Mammary epithelial cell (primary cell): ENCODE measurements at regions of chr6 and their contacts with region 1.

Region 1: GRCh38 chr6:42230345-42231321 is 13.0 kb upstream of the MRPS10 start:
- DNase-seq: no peak
- H3K4me3 ChIP-seq: no peak overlapping the region
- H3K27ac ChIP-seq: peak overlapping the region; percentile 45
- H3K4me1 ChIP-seq: peaks cover 38% of the 10 kb centered on the region
- H3K27me3 ChIP-seq: no peaks in the 10 kb centered on the region
- CTCF ChIP-seq: peak; percentile 68 to 69

Region 2: GRCh38 chr6:42075159-42075838 is 155.3 kb before region 1 on chr6:
- CTCF ChIA-PET with region 1: no interaction called
- dilution Hi-C with region 1: no loop called
- in situ Hi-C with region 1: no loop called
- intact Hi-C with region 1: loop called (anchors 1 kb)
- DNase-seq: peak; percentile 67
- H3K4me3 ChIP-seq: no peak overlapping the region
- H3K27ac ChIP-seq: no peak overlapping the region
- H3K4me1 ChIP-seq: no peaks in the 10 kb centered on the region
- H3K27me3 ChIP-seq: no peaks in the 10 kb centered on the region
- CTCF ChIP-seq: peak; percentile 91 to 94